ENCODE measurements at regions of chr17 and their contacts with region 1.

Region 1: DNA sequence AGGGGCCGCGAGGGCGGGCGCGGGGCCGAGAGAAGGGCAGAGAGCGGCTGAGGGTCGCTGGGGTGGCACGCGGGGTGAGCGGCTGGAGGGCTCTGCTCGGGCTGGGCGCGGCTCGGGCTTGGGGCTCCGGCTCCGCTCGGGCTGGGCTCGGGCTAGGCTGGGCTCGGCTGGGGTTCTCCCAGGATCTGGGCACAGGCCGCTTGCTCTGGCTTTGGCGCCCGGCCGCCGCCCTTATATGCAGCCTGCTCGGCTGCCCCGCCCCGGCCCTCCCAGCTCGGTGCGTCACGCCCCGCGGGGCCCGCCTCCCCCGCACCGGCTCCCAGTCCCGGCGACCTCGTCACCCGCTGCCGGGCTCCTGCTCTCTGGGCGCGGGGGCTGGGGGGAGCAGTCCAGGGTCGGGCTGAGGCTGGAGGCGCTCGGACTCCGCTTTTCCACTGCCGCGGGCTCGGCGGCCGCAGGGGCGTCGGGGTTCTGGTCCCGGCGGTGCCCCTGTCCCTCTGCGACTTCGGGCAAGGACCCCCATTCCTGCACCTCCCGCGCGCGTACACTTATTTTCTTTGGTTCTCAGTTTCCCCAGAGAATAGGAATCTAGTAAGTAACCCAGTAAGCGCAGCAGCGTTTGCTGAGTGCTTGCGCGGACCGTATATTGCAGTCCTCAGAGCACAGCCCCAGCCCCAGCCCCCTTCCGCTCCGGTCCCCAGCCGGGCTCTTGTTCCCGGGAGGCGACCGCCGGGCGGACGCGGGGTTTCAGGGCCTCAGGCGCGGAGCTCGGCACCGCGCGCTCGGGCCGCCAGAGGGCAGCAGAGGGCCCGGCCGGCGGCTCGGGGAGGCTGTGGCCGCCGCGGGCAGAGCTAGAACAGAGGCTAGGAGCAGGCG is at the start of gene RASD1:
- DNase-seq: peak; percentile 74 to 83 (median 76)
- H3K4me3 ChIP-seq: peak within 1 kb of the TSS in 1 of 2 donors; percentile 67
- H3K4me3 Mint-ChIP-seq: peak within 1 kb of the TSS; percentile 80 to 94 (median 88)
- H3K27ac ChIP-seq: peak within 1 kb of the TSS; percentile 43
- H3K27ac Mint-ChIP-seq: peak within 1 kb of the TSS in 5 of 7 donors; percentile 46 to 82 (median 56)
- H3K4me1 ChIP-seq: peaks cover 19% of the 10 kb centered on the region
- H3K4me1 Mint-ChIP-seq: peaks cover 3 to 22% (median 9%) of the 10 kb centered on the region in 4 donors
- H3K27me3 ChIP-seq: no peaks in the 10 kb centered on the region
- H3K27me3 Mint-ChIP-seq: peaks cover 0 to 1% of the 10 kb centered on the region in 2 donors
- total RNA-seq, gene RASD1: 0.86 to 0.87 TPM

Region 2: GRCh38 chr17:17460045-17460444 is 36.4 kb before region 1 on chr17:
- CTCF ChIA-PET with region 1: no interaction called
- POLR2A ChIA-PET with region 1: no interaction called
- intact Hi-C with region 1: no loop called
- DNase-seq: no peak
- H3K4me3 ChIP-seq: no peak overlapping the region
- H3K4me3 Mint-ChIP-seq: no peak overlapping the region
- H3K27ac ChIP-seq: no peak overlapping the region
- H3K27ac Mint-ChIP-seq: no peak overlapping the region
- H3K4me1 ChIP-seq: no peaks in the 10 kb centered on the region
- H3K4me1 Mint-ChIP-seq: peaks cover 0 to 4% (median 1%) of the 10 kb centered on the region in 4 donors
- H3K27me3 ChIP-seq: no peaks in the 10 kb centered on the region
- H3K27me3 Mint-ChIP-seq: peaks cover 10 to 13% of the 10 kb centered on the region in 2 donors

Region 3: GRCh38 chr17:17476865-17477467 is 19.5 kb before region 1 on chr17 and contains the start of gene MED9:
- CTCF ChIA-PET with region 1: interaction called, 15 read pairs
- POLR2A ChIA-PET with region 1: interaction called, 3 read pairs
- intact Hi-C with region 1: loop called (anchors 1 kb)
- DNase-seq: peak; percentile 92 to 94 (median 93)
- H3K4me3 ChIP-seq: peak within 1 kb of the TSS; percentile 87 to 99
- H3K4me3 Mint-ChIP-seq: peak within 1 kb of the TSS; percentile 89 to 95 (median 91)
- H3K27ac ChIP-seq: peak within 1 kb of the TSS; percentile 76
- H3K27ac Mint-ChIP-seq: peak within 1 kb of the TSS; percentile 84 to 97 (median 94)
- H3K4me1 ChIP-seq: peaks cover 45% of the 10 kb centered on the region
- H3K4me1 Mint-ChIP-seq: peaks cover 23 to 55% (median 42%) of the 10 kb centered on the region in 4 donors
- H3K27me3 ChIP-seq: no peaks in the 10 kb centered on the region
- H3K27me3 Mint-ChIP-seq: peaks cover 7 to 12% of the 10 kb centered on the region in 2 donors
- total RNA-seq, gene MED9: 17.1 to 18.9 TPM

Region 4: DNA sequence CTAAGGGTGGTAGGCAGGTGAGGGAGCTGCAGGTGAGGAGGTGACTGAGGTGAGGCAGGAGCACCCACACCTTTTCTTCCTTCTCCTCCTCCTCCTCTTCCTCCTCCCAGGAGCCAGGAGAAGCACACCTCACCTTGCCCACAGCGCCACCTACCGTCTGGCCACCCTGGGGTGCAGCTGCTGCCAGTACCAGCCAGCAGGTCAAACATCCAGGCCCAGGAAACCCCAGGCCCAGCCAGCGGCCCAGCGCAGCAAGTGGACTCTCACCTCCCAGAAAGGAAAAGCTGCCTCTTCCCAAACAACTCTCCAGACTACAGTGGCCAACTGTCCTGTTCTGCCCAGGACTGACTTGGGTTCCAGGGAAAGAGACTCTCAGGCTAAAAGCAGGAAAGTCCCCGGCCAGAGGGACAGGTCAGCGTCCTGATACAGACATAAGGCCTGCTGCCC is 72.3 kb after region 1 on chr17:
- CTCF ChIA-PET with region 1: interaction called, 11 read pairs
- POLR2A ChIA-PET with region 1: no interaction called
- intact Hi-C with region 1: no loop called
- DNase-seq: peak in 4 of 5 donors; percentile 19 to 41 (median 27)
- H3K4me3 ChIP-seq: no peak overlapping the region
- H3K4me3 Mint-ChIP-seq: no peak overlapping the region
- H3K27ac ChIP-seq: no peak overlapping the region
- H3K27ac Mint-ChIP-seq: no peak overlapping the region
- H3K4me1 ChIP-seq: no peaks in the 10 kb centered on the region
- H3K4me1 Mint-ChIP-seq: peaks cover 0 to 5% (median 1%) of the 10 kb centered on the region in 4 donors
- H3K27me3 ChIP-seq: no peaks in the 10 kb centered on the region
- H3K27me3 Mint-ChIP-seq: no peaks in the 10 kb centered on the region

Region 5: DNA sequence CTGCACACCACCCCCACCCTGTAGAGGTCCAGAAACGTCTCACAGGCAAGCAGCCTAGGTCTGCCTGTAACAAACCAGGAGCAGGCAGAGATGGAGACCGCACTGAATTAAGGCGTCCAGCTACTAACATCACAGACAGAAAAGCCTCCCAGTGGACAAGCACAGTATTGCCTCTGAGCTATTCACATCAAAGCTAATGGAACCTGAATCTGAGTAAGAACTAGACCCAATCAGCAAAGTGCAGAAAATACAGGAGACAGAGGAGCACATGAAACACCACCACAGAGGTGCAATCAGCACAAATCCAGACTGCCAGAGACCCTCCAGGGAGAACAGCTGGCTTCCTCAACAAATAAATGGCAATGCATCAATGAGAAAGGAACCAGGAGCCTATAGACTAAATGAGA is 117.3 kb after region 1 on chr17:
- CTCF ChIA-PET with region 1: interaction called, 17 read pairs
- POLR2A ChIA-PET with region 1: interaction called, 3 read pairs
- intact Hi-C with region 1: loop called (anchors 1 kb)
- DNase-seq: peak; percentile 20 to 52 (median 42)
- H3K4me3 ChIP-seq: no peak overlapping the region
- H3K4me3 Mint-ChIP-seq: peak overlapping the region in 1 of 8 donors; percentile 39
- H3K27ac ChIP-seq: no peak overlapping the region
- H3K27ac Mint-ChIP-seq: no peak overlapping the region
- H3K4me1 ChIP-seq: no peaks in the 10 kb centered on the region
- H3K4me1 Mint-ChIP-seq: peaks cover 0 to 6% (median 3%) of the 10 kb centered on the region in 4 donors
- H3K27me3 ChIP-seq: no peaks in the 10 kb centered on the region
- H3K27me3 Mint-ChIP-seq: no peaks in the 10 kb centered on the region

Region 6: DNA sequence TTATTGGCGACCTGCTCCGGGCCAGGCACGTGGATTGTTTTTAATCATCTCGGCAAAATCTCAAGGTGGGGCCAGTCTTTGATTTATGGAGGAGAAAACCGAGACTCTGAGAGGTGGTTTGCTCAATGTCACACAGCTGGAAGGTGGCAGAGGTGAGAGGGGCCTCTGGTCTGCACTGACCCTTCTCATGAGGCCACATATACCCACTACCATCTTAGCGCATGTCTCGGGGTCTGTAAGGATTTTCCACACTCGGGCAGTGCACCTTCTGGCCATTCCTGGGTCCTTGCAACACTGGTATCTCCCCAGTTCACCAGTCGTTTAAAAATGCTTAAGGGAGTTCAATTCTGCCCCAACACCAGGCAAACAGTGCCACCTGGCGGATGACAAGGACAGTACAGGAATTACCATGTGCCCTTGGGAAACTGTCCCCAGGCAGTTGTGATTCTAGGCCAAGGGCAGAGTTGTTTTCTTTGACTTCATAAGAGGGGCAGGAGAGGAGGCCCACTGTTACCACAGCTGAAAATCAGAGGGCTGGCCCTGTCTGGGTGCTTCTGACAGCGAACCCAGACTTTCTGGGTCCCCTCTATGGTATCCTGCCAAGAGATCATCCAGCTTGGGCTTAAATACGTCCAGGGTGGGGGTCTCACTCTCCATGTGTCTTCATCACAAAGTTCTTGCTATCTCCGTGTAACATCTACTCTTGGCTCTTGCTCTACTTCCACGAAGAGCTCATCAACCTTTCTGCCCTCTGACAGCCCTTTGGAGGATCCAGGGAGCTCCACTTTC is 145.4 kb after region 1 on chr17:
- CTCF ChIA-PET with region 1: interaction called, 62 read pairs
- POLR2A ChIA-PET with region 1: interaction called, 6 read pairs
- intact Hi-C with region 1: loop called (anchors 1 kb)
- DNase-seq: peak; percentile 67 to 74 (median 72)
- H3K4me3 ChIP-seq: no peak overlapping the region
- H3K4me3 Mint-ChIP-seq: no peak overlapping the region
- H3K27ac ChIP-seq: no peak overlapping the region
- H3K27ac Mint-ChIP-seq: peak overlapping the region in 1 of 7 donors; percentile 27
- H3K4me1 ChIP-seq: no peaks in the 10 kb centered on the region
- H3K4me1 Mint-ChIP-seq: no peaks in the 10 kb centered on the region
- H3K27me3 ChIP-seq: no peaks in the 10 kb centered on the region
- H3K27me3 Mint-ChIP-seq: peaks cover 6% of the 10 kb centered on the region in 2 donors

Measured in CD4-positive, alpha-beta memory T cell (primary cell).